ENCODE measurements at regions of chr6 and their contacts with region 1.

Region 1: GRCh38 chr6:45922728-45923351 is 92.8 kb downstream of the CLIC5 start:
- DNase-seq: peak; percentile 82
- H3K4me3 Mint-ChIP-seq: peak overlapping the region; percentile 13
- H3K27ac Mint-ChIP-seq: peak overlapping the region; percentile 80
- H3K4me1 Mint-ChIP-seq: peaks cover 54% of the 10 kb centered on the region
- H3K27me3 Mint-ChIP-seq: no peaks in the 10 kb centered on the region

Region 2: GRCh38 chr6:44630125-44631028 is 1292.5 kb before region 1 on chr6:
- CTCF ChIA-PET with region 1: interaction called, 32 read pairs
- POLR2A ChIA-PET with region 1: interaction called, 5 read pairs
- DNase-seq: peak; percentile 60
- H3K4me3 Mint-ChIP-seq: no peak overlapping the region
- H3K27ac Mint-ChIP-seq: no peak overlapping the region
- H3K4me1 Mint-ChIP-seq: peaks cover 24% of the 10 kb centered on the region
- H3K27me3 Mint-ChIP-seq: peaks cover 3% of the 10 kb centered on the region

Region 3: GRCh38 chr6:45377554-45378333 is 545.1 kb before region 1 on chr6 and contains the start of gene SUPT3H:
- CTCF ChIA-PET with region 1: interaction called, 14 read pairs
- POLR2A ChIA-PET with region 1: interaction called, 5 read pairs
- DNase-seq: peak; percentile 90
- H3K4me3 Mint-ChIP-seq: peak within 1 kb of the TSS; percentile 92
- H3K27ac Mint-ChIP-seq: peak within 1 kb of the TSS; percentile 95
- H3K4me1 Mint-ChIP-seq: peaks cover 27% of the 10 kb centered on the region
- H3K27me3 Mint-ChIP-seq: no peaks in the 10 kb centered on the region
- total RNA-seq, gene SUPT3H: 7.4 to 9.7 TPM